ENCODE measurements at regions of chr5 and their contacts with region 1.

Region 1: DNA sequence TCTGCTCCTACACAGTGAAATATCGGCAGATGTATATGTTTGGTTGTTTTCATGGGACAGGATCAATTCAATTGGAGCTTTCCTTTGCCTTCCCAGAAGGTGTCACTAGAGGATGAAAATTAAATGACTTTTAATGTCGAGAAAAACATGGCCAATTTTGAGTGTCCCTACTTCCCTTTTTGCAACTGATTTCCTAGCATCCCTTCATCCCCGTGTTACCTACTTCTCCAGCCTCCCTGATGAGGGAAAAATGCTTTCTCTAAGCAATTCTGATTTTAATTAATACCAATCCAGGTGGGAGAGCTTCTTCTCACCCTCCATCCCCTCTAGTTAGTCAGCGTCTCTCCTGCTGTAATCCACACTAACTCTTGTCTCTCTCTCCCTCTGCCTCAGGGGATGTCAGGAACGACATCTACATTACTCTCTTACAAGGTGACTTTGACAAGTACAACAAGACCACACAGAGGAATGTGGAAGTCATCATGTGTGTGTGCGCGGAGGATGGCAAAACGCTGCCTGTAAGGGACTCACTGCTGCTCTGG is 64.9 kb downstream of the DOCK2 start:
- DNase-seq: no peak
- ATAC-seq: no peak
- H3K4me3 ChIP-seq: no peak overlapping the region
- H3K27ac ChIP-seq: no peak overlapping the region
- H3K4me1 ChIP-seq: no peaks in the 10 kb centered on the region
- H3K27me3 ChIP-seq: no peaks in the 10 kb centered on the region
- CTCF ChIP-seq: peak; percentile 39

Region 2: DNA sequence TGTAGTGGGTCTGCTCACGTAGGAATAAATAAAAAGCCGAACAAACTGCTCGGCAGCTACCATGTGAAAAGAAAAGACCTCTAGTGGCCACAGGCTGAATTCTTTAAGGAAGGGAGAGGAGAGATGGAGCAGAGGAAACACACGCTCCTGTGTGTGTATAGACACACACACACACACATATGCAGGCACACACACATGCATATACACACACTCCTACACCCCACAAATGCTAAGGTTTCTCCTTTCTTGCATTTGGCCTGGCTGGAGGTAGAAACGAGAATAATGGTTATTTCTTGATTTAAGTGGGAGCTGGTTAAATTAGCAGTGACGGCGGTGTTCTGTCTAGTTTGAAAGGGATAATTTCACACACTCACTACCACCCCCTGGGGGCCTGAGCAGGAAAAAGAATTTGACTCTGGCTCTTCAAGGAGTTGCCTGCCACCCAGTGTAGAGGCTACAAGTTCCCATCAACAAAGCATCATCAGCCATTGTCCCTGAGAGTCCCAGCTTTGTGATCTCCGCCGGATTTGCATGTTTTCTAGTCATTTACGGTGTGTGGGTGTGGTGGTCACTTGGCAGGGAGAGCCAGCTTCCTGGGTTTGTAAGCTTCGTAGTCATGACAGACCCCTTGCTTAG is 278.6 kb after region 1 on chr5 and contains the start of gene INSYN2B:
- intact Hi-C with region 1: loop called (anchors 10 kb)
- DNase-seq: no peak
- ATAC-seq: peak; percentile 84
- H3K4me3 ChIP-seq: peak within 1 kb of the TSS; percentile 7
- H3K27ac ChIP-seq: no peak within 1 kb of the TSS
- H3K4me1 ChIP-seq: no peaks in the 10 kb centered on the region
- H3K27me3 ChIP-seq: no peaks in the 10 kb centered on the region
- CTCF ChIP-seq: peak; percentile 60
- total RNA-seq, gene INSYN2B: 0.17 TPM